ENCODE measurements at regions of chr10 and their contacts with region 1.

Region 1: GRCh38 chr10:93039721-93040120 is 20.9 kb upstream of the CYP26C1 start:
- DNase-seq: peak; percentile 31
- ATAC-seq: peak; percentile 67
- H3K4me3 ChIP-seq: no peak overlapping the region
- H3K27ac ChIP-seq: no peak overlapping the region
- H3K4me1 ChIP-seq: no peaks in the 10 kb centered on the region
- H3K27me3 ChIP-seq: no peaks in the 10 kb centered on the region
- CTCF ChIP-seq: peak; percentile 54
- EP300 ChIP-seq: no peak
- POLR2A ChIP-seq: no peak
- RAD21 ChIP-seq: peak; percentile 61

Region 2: DNA sequence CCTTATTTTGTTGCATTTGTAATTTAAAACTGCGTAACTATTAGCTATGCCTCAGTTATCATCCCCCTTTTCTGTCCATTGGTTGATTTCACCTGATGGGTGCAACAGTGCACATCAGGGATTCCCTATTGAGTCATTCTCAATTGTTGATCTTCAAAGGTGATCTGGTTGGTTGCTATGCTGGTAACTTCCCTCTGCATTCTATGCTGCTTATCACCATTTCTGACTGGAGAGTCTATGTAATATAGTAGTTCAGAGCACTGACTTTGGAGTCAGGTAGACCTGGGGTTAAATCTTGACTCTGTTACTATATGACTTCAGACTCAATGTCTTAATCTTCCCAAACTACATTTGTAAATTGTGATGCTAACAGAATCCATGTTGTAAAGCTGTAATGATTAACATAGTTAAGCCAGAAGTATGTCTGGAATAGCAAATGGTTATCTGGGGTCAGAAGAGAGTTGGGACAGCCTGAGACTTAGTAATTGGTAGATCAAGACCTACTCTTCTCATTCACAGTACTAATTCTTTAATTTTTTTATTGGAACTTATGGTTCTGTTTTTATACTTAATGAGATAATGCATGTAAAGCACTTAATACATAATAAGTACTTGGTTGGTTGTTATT is 153.3 kb before region 1 on chr10:
- CTCF ChIA-PET with region 1: interaction called, 10 read pairs
- POLR2A ChIA-PET with region 1: no interaction called
- in situ Hi-C with region 1: no loop called
- intact Hi-C with region 1: loop called (anchors 10 kb)
- DNase-seq: peak; percentile 16
- ATAC-seq: peak; percentile 49; the same call in 2 of the 3 replicates
- H3K4me3 ChIP-seq: no peak overlapping the region
- H3K27ac ChIP-seq: no peak overlapping the region
- H3K4me1 ChIP-seq: peaks cover 23% of the 10 kb centered on the region
- H3K27me3 ChIP-seq: no peaks in the 10 kb centered on the region
- CTCF ChIP-seq: no peak
- EP300 ChIP-seq: no peak
- POLR2A ChIP-seq: no peak
- RAD21 ChIP-seq: no peak

Region 3: DNA sequence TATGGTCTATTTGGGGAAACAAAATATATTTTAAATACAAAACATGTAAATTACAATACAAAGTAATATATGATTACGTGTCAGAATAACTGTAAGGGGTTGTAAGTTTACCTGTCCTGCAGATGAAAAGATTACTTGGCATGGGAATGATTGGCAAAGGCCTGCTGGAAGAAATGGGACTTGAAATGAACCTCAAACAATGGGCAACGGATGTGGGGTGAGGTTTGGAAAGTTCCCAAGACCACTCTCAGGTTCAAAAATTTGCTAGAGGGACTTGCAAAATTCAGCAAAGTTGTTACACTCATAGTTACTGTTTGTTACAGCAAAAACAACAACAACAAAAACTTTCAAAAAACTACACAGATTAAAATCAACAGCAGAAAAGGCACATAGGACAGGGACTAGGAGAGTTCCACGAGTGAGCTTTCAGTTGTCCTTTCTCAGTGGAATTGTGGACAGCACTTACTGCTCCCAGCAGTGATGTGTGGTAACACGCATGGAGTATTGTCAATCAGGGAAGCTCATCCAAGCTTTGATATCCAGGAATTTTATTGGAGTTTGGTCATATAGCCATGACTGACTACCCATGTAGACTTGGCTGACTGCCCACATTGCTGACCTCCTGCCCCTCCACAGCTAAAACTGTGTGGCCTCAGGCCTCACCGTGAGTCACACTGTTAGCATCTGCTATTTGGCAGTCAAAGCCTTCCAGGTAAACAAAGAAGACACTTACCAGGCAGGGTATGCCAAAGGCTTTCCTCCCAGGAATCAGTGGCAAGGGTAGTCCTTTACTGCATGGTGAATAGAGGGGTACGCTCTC is 147.6 kb before region 1 on chr10:
- CTCF ChIA-PET with region 1: no interaction called
- POLR2A ChIA-PET with region 1: no interaction called
- in situ Hi-C with region 1: no loop called
- intact Hi-C with region 1: loop called (anchors 10 kb)
- DNase-seq: peak; percentile 96
- ATAC-seq: peak; percentile 98
- H3K4me3 ChIP-seq: peak overlapping the region in 1 of 3 experiments; percentile 28; a peak in 1 of 6 replicates
- H3K27ac ChIP-seq: peak overlapping the region; percentile 68
- H3K4me1 ChIP-seq: peaks cover 32% of the 10 kb centered on the region
- H3K27me3 ChIP-seq: no peaks in the 10 kb centered on the region
- CTCF ChIP-seq: no peak
- EP300 ChIP-seq: peak in 1 of 2 experiments; percentile 72; a peak in 2 of 4 replicates
- POLR2A ChIP-seq: no peak
- RAD21 ChIP-seq: no peak

Region 4: DNA sequence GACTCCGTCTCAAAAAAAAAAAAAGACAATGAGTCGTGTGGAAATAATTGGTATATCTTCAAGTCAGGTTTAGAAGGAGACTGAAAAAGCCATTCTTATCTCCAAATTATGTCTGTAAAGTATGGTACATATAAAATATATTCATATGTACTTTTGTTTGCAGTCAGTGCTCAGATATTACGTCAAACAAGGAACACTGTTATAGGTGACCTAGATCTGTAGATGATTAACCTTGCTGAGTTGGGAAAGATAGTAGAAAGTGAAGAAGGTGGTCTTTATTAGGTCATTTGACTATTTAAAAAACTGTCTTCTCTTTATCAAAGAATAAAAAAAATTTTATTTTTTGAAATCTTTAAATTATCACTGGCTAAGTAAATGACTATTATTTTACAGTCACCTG is 24.0 kb before region 1 on chr10:
- CTCF ChIA-PET with region 1: no interaction called
- POLR2A ChIA-PET with region 1: no interaction called
- in situ Hi-C with region 1: no loop called
- intact Hi-C with region 1: no loop called
- DNase-seq: peak; percentile 40
- ATAC-seq: peak; percentile 67
- H3K4me3 ChIP-seq: no peak overlapping the region
- H3K27ac ChIP-seq: no peak overlapping the region
- H3K4me1 ChIP-seq: peaks cover 7% of the 10 kb centered on the region
- H3K27me3 ChIP-seq: no peaks in the 10 kb centered on the region
- CTCF ChIP-seq: no peak
- EP300 ChIP-seq: no peak
- POLR2A ChIP-seq: no peak
- RAD21 ChIP-seq: no peak

Region 5: GRCh38 chr10:93106631-93107072 is 66.9 kb after region 1 on chr10:
- CTCF ChIA-PET with region 1: no interaction called
- POLR2A ChIA-PET with region 1: no interaction called
- in situ Hi-C with region 1: no loop called
- intact Hi-C with region 1: no loop called
- DNase-seq: peak; percentile 95
- ATAC-seq: peak; percentile 100
- H3K4me3 ChIP-seq: peak overlapping the region in 1 of 3 experiments; percentile 20; a peak in 1 of 6 replicates
- H3K27ac ChIP-seq: peak overlapping the region; percentile 53
- H3K4me1 ChIP-seq: peaks cover 27% of the 10 kb centered on the region
- H3K27me3 ChIP-seq: no peaks in the 10 kb centered on the region
- CTCF ChIP-seq: no peak
- EP300 ChIP-seq: peak in 1 of 2 experiments; percentile 89; a peak in 3 of 4 replicates
- POLR2A ChIP-seq: no peak
- RAD21 ChIP-seq: no peak